K562 (cell line): ENCODE measurements at regions of chr4 and their contacts with region 1.

Region 1: GRCh38 chr4:15001869-15002658 is at the start of gene CPEB2:
- DNase-seq: peak; percentile 81 to 96 (median 86)
- ATAC-seq: peak; percentile 83
- H3K4me3 ChIP-seq: peak within 1 kb of the TSS; percentile 89
- H3K27ac ChIP-seq: peak within 1 kb of the TSS; percentile 98
- H3K4me1 ChIP-seq: peaks cover 8 to 30% of the 10 kb centered on the region in 2 experiments; a peak in 3 of 5 replicates
- H3K27me3 ChIP-seq: no peaks in the 10 kb centered on the region
- CTCF ChIP-seq: no peak
- EP300 ChIP-seq: no peak
- POLR2A ChIP-seq: peak; percentile 86
- RAD21 ChIP-seq: 0 out of 4 replicates have a peak, but pooled peaks of 1 of the 2 experiments have one; percentile 2
- polyA plus RNA-seq, gene CPEB2: 0.39 to 0.41 TPM

Region 2: GRCh38 chr4:13627606-13628301 is 1374.3 kb before region 1 on chr4 and contains the start of gene BOD1L1:
- CTCF ChIA-PET with region 1: no interaction called
- POLR2A ChIA-PET with region 1: no interaction called
- in situ Hi-C with region 1: no loop called
- intact Hi-C with region 1: loop called (anchors 10 kb)
- DNase-seq: peak; percentile 77 to 94 (median 84)
- ATAC-seq: peak; percentile 95
- H3K4me3 ChIP-seq: peak within 1 kb of the TSS; percentile 98
- H3K27ac ChIP-seq: peak within 1 kb of the TSS; percentile 89
- H3K4me1 ChIP-seq: peaks cover 4 to 5% of the 10 kb centered on the region in 2 experiments; a peak in 2 of 5 replicates
- H3K27me3 ChIP-seq: no peaks in the 10 kb centered on the region
- CTCF ChIP-seq: peak; percentile 55 to 69 (median 62)
- EP300 ChIP-seq: peak; percentile 54
- POLR2A ChIP-seq: peak; percentile 92
- RAD21 ChIP-seq: no peak
- polyA plus RNA-seq, gene BOD1L1: 4.8 to 7.2 TPM

Region 3: DNA sequence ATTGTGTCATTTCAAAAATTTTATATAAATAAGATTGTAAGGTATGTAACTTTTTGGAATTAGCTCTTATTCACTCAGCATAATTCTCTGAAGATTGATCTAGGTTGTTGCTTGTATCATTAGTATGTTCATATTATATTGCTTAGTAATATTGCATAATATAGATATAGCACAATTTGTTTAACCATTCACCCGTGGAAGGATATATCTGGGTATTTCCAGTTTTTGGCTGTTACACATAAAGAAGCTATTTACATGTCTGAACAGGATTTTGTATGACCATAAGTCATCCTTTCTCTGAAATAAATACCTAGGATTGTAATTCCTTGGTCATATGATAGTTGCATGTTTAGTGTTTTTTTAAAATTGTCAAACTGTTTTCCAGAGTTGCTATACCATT is 82.7 kb after region 1 on chr4:
- CTCF ChIA-PET with region 1: no interaction called
- POLR2A ChIA-PET with region 1: no interaction called
- in situ Hi-C with region 1: no loop called
- intact Hi-C with region 1: loop called (anchors 5 kb)
- DNase-seq: no peak
- ATAC-seq: no peak
- H3K4me3 ChIP-seq: no peak overlapping the region
- H3K27ac ChIP-seq: no peak overlapping the region
- H3K4me1 ChIP-seq: no peaks in the 10 kb centered on the region
- H3K27me3 ChIP-seq: no peaks in the 10 kb centered on the region
- CTCF ChIP-seq: no peak
- EP300 ChIP-seq: no peak
- POLR2A ChIP-seq: no peak
- RAD21 ChIP-seq: no peak

Region 4: GRCh38 chr4:15327311-15328298 is 325.5 kb after region 1 on chr4:
- CTCF ChIA-PET with region 1: no interaction called
- POLR2A ChIA-PET with region 1: no interaction called
- in situ Hi-C with region 1: no loop called
- intact Hi-C with region 1: no loop called
- DNase-seq: no peak
- ATAC-seq: no peak
- H3K4me3 ChIP-seq: no peak overlapping the region
- H3K27ac ChIP-seq: no peak overlapping the region
- H3K4me1 ChIP-seq: no peaks in the 10 kb centered on the region
- H3K27me3 ChIP-seq: no peaks in the 10 kb centered on the region
- CTCF ChIP-seq: no peak
- EP300 ChIP-seq: no peak
- POLR2A ChIP-seq: no peak
- RAD21 ChIP-seq: no peak

Region 5: GRCh38 chr4:15655229-15656037 is 653.4 kb after region 1 on chr4 and contains the start of gene FBXL5:
- CTCF ChIA-PET with region 1: no interaction called
- POLR2A ChIA-PET with region 1: no interaction called
- in situ Hi-C with region 1: loop called (anchors 25 kb)
- intact Hi-C with region 1: loop called (anchors 10 kb)
- DNase-seq: peak; percentile 88 to 97 (median 96)
- ATAC-seq: peak; percentile 49
- H3K4me3 ChIP-seq: peak within 1 kb of the TSS; percentile 84
- H3K27ac ChIP-seq: peak within 1 kb of the TSS; percentile 98
- H3K4me1 ChIP-seq: peaks cover 13 to 16% of the 10 kb centered on the region in 2 experiments
- H3K27me3 ChIP-seq: no peaks in the 10 kb centered on the region
- CTCF ChIP-seq: no peak
- EP300 ChIP-seq: no peak
- POLR2A ChIP-seq: peak; percentile 78
- RAD21 ChIP-seq: no peak
- polyA plus RNA-seq, gene FBXL5: 6.0 to 10.8 TPM

Region 6: GRCh38 chr4:16225863-16226815 is 1224.1 kb after region 1 on chr4 and contains the start of gene TAPT1:
- CTCF ChIA-PET with region 1: no interaction called
- POLR2A ChIA-PET with region 1: no interaction called
- in situ Hi-C with region 1: no loop called
- intact Hi-C with region 1: loop called (anchors 10 kb)
- DNase-seq: peak; percentile 80 to 84 (median 82)
- ATAC-seq: peak; percentile 57
- H3K4me3 ChIP-seq: peak within 1 kb of the TSS; percentile 81
- H3K27ac ChIP-seq: peak within 1 kb of the TSS; percentile 91
- H3K4me1 ChIP-seq: peaks cover 6 to 12% of the 10 kb centered on the region in 2 experiments; a peak in 4 of 5 replicates
- H3K27me3 ChIP-seq: no peaks in the 10 kb centered on the region
- CTCF ChIP-seq: no peak
- EP300 ChIP-seq: no peak
- POLR2A ChIP-seq: no peak
- RAD21 ChIP-seq: no peak
- polyA plus RNA-seq, gene TAPT1: 1.6 to 2.7 TPM